ENCODE measurements at regions of chr17 and their contacts with region 1.

Region 1: DNA sequence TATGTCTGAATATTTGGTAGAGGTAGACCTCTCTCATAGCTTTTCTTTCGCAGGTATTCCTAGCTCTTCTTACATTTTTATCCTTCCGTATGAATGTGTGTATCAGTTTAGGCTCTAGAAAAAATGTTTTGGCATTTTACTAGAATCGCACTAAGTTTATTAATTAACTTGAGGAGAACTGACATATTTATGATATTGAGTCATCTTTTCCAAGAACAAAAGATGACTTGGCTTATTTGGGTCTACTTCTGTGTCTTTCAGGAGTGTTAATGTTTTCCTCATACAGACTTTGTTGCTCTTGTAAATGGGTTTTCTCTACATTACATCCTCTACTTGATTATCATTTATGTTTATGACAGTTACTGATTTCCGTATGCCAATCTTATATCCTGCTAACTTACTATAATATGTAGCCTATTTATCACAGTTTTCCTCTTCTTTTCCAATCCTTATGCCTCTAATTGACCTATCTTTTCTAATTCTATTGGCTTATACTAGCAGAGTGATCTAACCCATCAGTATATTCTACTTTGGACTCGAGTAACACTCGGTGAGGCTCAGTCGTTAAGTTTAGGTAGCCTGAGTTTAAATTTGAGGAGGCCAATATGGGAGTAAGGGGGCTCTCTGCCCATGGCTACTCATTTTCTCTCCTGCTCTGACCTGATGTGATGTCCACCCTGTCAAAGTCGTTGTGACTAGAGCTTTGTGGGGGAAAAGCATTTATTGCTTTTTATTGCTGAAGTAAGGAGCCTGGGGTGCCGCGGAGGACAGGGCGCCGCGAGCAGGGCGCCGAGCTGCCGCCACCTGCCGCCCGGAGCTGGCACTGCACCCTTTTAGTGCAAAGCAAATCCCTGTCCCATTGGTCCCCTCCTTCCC is 20.0 kb downstream of the ST6GALNAC1 start:
- DNase-seq: peak; percentile 94
- H3K4me3 ChIP-seq: peak overlapping the region in 1 of 2 experiments; percentile 15; a peak in 2 of 4 replicates
- H3K27ac ChIP-seq: peak overlapping the region; percentile 47 to 53; a peak in 3 of 4 replicates
- H3K4me1 ChIP-seq: 0 out of 4 replicates have a peak, but pooled peaks cover 0 to 8% of the 10 kb centered on the region in 2 experiments
- H3K27me3 ChIP-seq: peaks cover 19% of the 10 kb centered on the region; the same call in 1 of the 2 replicates
- CTCF ChIP-seq: peak; percentile 99
- EP300 ChIP-seq: peak in 1 of 2 experiments; percentile 3; a peak in 1 of 4 replicates
- RAD21 ChIP-seq: peak; percentile 91

Region 2: DNA sequence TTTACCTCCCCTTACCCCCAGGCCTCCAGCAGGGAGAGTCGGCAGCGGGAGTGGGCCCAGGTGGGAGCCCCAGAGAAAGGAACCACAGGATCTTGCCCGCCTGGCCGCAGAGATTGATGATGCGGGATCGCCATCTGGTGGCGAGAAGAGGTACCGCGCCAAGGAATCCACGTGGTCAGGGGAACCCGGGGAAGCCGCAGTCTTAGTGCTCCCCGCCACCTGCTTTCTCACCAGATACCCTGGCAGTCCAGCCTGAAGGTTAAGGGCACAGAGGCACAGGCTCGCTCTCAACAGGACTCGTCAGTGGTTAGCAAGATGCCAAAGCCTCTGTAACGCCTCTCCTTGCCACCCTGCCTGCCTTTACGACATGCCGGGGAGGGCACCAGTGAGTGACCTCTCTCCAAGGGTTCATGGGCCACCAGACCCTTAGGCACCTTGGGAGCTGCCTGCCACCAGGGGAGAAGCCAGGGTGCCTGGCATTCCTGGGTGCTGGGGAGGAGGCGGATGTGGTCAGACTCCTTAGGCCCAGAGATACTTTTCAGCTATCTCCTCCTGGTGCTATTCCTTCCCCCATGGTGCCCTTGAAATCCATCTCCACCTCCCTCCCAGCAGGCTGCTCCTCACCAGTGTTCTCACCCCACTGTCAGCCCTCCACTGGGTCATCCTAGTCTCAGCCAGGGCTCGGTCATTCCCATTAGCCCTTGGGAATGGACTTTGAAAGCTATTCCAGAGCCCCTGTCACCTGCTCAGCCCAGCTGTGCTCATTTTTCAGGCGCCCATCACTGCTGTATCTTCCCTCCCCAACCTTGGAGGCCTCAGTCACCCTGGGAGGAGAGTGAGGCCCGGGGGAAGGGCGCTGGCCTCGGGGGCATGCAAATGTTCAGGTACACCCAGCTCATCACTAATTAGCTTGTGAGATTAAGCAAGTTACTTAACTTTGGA is 116.8 kb before region 1 on chr17:
- CTCF ChIA-PET with region 1: interaction called, 30 read pairs
- POLR2A ChIA-PET with region 1: no interaction called
- DNase-seq: peak; percentile 95
- H3K4me3 ChIP-seq: no peak overlapping the region; a peak in 1 of 4 replicates
- H3K27ac ChIP-seq: no peak overlapping the region
- H3K4me1 ChIP-seq: peaks cover 0 to 14% of the 10 kb centered on the region in 2 experiments; a peak in 1 of 4 replicates
- H3K27me3 ChIP-seq: peaks cover 9% of the 10 kb centered on the region
- CTCF ChIP-seq: peak; percentile 96
- EP300 ChIP-seq: no peak
- RAD21 ChIP-seq: peak; percentile 99

Region 3: GRCh38 chr17:76557368-76558197 is 65.9 kb before region 1 on chr17:
- CTCF ChIA-PET with region 1: interaction called, 206 read pairs
- POLR2A ChIA-PET with region 1: interaction called, 6 read pairs
- DNase-seq: peak; percentile 98
- H3K4me3 ChIP-seq: peak overlapping the region; percentile 83 to 92
- H3K27ac ChIP-seq: peak overlapping the region; percentile 71 to 89
- H3K4me1 ChIP-seq: peaks cover 26 to 42% of the 10 kb centered on the region in 2 experiments
- H3K27me3 ChIP-seq: no peaks in the 10 kb centered on the region
- CTCF ChIP-seq: peak; percentile 78
- EP300 ChIP-seq: no peak
- RAD21 ChIP-seq: peak; percentile 50

Region 4: GRCh38 chr17:76585818-76586593 is 37.5 kb before region 1 on chr17 and contains the start of gene ST6GALNAC2:
- CTCF ChIA-PET with region 1: interaction called, 23 read pairs
- POLR2A ChIA-PET with region 1: no interaction called
- DNase-seq: peak; percentile 94
- H3K4me3 ChIP-seq: peak within 1 kb of the TSS; percentile 46 to 57
- H3K27ac ChIP-seq: no peak within 1 kb of the TSS
- H3K4me1 ChIP-seq: peaks cover 0 to 9% of the 10 kb centered on the region in 2 experiments; a peak in 1 of 4 replicates
- H3K27me3 ChIP-seq: peaks cover 37% of the 10 kb centered on the region
- CTCF ChIP-seq: peak; percentile 38
- EP300 ChIP-seq: no peak
- RAD21 ChIP-seq: peak; percentile 65
- polyA plus RNA-seq, gene ST6GALNAC2: 0.57 and 0.94 TPM in 2 replicates

Region 5: DNA sequence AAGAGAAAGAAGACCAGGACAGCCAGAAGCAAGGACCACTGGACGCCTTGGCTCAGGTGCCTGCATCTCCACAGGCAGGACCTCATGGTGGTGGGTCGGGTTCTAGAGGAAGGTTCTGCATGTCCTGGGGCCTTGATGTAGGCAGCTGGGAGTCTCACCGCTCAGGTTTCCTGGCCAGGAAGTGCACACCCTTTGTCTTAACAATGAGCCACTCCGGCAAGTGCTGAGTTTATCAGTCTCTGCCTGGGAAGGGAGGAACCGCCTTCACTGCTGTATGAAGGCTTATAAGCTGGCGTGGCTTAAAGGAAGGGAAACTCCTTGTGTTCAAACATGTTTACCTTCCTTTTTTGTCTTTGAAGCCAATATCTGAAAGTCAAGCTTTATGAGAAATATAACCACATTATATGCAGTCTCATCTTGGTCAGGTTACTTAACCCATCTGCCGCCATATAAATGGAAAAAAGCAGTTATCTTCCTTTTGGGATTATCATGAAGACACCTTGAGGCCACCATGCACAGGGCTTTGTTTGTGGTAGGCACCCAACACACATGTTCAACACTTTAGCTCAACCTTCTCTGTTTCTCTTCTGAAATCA is 20.1 kb after region 1 on chr17 and contains the start of gene ST6GALNAC1:
- CTCF ChIA-PET with region 1: interaction called, 65 read pairs
- POLR2A ChIA-PET with region 1: no interaction called
- DNase-seq: no peak
- H3K4me3 ChIP-seq: no peak within 1 kb of the TSS
- H3K27ac ChIP-seq: no peak within 1 kb of the TSS
- H3K4me1 ChIP-seq: peaks cover 0 to 14% of the 10 kb centered on the region in 2 experiments; a peak in 2 of 4 replicates
- H3K27me3 ChIP-seq: no peaks in the 10 kb centered on the region; the same call in 1 of the 2 replicates
- CTCF ChIP-seq: no peak
- EP300 ChIP-seq: no peak
- RAD21 ChIP-seq: no peak
- polyA plus RNA-seq, gene ST6GALNAC1: not detected in 2 replicates

Region 6: DNA sequence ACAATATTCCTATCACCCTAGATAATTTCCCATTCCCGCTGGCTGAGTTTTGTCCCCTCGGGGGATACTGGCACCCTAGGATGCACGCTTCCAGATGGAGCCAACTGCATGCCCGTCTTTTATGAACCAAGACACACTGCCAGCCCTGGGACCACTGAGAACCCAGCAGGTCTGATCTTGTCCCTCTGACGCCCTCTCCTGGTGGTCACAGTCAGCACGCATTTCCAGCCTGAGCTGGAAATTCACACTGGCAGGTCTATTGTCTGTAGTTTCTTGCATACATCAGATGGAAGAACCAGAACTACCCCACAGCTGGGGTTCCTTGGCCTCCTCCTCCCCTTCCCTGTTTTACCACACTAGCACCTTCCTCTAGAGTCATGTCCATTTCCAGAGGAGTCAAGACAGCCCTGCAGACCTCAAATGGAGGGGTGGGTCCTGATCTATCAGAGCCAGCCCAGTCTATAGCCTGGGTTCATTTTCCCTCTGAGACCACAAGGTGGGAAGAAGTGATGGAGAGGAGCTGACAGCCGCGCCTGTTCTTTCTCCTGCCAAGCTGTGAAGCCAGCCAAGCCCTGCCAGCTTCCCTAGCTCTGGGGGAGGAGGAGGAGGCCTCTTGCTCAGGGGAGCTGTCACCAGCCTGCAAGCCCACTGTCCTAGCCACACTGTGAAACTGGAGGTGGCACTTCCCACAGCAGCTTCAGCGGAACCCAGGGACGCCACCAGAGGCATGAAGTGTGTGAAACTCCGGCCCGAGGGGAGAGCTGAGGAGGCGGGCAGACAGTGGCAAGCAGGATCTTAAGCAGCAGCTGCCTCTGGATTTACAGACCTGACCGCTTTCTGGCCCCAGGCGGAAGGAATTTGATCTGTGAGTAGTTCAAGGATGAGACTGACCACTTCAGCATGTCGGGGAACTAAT is 58.0 kb after region 1 on chr17:
- CTCF ChIA-PET with region 1: interaction called, 71 read pairs
- POLR2A ChIA-PET with region 1: interaction called, 6 read pairs
- DNase-seq: peak; percentile 89
- H3K4me3 ChIP-seq: no peak overlapping the region; a peak in 1 of 4 replicates
- H3K27ac ChIP-seq: peak overlapping the region in 1 of 2 experiments; percentile 23; a peak in 1 of 4 replicates
- H3K4me1 ChIP-seq: peaks cover 0 to 23% of the 10 kb centered on the region in 2 experiments; a peak in 1 of 4 replicates
- H3K27me3 ChIP-seq: no peaks in the 10 kb centered on the region
- CTCF ChIP-seq: peak; percentile 95
- EP300 ChIP-seq: no peak
- RAD21 ChIP-seq: peak; percentile 95

Measured in SK-N-SH (cell line).